ENCODE measurements at regions of chr3 and their contacts with region 1.

Region 1: GRCh38 chr3:170368921-170369320 is 11.4 kb downstream of the SKIL start:
- DNase-seq: no peak
- ATAC-seq: no peak

Region 2: GRCh38 chr3:170307671-170308403 is 61.1 kb before region 1 on chr3:
- intact Hi-C with region 1: loop called (anchors 5 kb)
- DNase-seq: no peak
- ATAC-seq: no peak

Region 3: GRCh38 chr3:170531657-170532335 is 162.9 kb after region 1 on chr3:
- intact Hi-C with region 1: no loop called
- DNase-seq: no peak
- ATAC-seq: peak; percentile 75

Measured in left ventricle myocardium superior (tissue), 1 donor.